ENCODE measurements at regions of chr19 and their contacts with region 1.

Region 1: DNA sequence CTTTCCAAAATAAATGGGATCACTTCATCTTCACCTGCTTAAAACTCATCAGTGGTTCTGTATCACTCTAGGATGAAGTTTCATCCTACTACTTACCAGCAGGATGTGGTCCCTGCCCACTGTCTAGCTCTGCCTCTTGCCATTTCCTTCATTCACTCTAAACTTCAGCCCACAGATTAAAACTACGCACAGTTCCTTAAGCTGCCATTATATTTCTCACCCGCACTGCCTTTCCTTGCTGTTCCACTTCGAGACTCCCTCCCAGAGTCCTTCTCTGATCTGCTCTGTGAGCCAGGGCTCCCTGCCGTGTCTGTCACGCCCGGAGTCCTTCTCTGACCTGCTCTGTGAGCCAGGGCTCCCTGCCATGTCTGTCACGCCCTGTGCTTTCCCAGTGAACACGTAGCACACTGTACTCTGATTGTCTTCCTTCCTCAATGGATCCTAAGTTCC is 52.0 kb upstream of the NPAS1 start:
- DNase-seq: peak; percentile 91 to 94
- H3K4me3 ChIP-seq: no peak overlapping the region
- H3K27ac ChIP-seq: peak overlapping the region in 2 of 3 donors; percentile 31 to 45
- H3K4me1 ChIP-seq: peaks cover 17 to 31% of the 10 kb centered on the region in 2 donors
- H3K27me3 ChIP-seq: no peaks in the 10 kb centered on the region
- CTCF ChIP-seq: no peak
- POLR2A ChIP-seq: no peak

Region 2: DNA sequence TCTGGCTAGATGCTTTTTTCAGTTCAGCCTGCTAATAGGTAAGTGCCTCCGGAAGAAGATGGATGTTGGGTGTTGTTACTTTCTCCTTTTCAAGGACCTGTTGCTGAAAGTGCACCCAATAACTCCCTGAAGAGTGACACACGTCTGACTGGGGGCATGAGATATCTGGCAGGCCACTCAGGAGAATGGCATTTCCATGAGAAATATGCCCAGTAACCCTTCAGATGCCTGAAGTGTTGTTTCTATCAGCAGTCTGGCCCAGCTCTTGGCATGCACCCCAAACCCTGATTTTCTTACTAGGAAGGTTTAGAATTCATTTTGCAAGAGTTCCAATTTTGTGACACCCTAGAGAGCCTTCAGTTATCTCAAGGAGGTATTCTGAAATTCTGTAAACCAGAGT is 35.3 kb before region 1 on chr19:
- intact Hi-C with region 1: loop called (anchors 5 kb)
- DNase-seq: peak; percentile 46
- H3K4me3 ChIP-seq: no peak overlapping the region
- H3K27ac ChIP-seq: peak overlapping the region in 2 of 3 donors; percentile 28 to 65
- H3K4me1 ChIP-seq: peaks cover 29 to 63% of the 10 kb centered on the region in 2 donors
- H3K27me3 ChIP-seq: no peaks in the 10 kb centered on the region
- CTCF ChIP-seq: no peak
- POLR2A ChIP-seq: no peak

Region 3: DNA sequence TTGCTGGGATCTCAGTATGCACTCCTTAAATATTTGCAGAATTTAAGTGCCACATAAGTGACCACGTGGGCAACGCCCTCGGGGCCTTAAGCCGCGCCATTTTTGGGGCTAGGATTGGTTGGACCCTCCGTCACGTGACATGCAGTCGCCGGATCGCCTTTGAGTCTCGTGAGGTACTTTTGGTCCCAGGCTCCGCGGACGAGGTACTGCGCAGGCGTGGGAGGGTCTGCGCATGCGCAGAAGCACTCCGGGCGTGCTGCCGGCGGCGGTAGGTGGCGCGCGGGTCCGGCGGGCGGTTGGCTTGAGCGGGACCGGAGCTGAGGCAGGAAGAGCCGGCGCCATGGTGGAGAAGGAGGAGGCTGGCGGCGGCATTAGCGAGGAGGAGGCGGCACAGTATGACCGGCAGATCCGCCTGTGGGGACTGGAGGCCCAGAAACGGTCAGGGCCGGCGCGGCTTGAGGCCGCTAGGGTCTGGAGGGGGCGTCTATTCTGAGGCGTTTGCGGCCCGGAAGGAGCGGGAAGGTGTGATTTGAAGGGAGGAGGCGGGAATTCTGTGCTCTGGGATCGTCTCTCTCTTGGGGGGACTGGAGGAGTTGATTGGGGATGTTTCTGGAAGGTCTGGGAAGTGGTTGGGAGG is 163.1 kb after region 1 on chr19 and contains the start of gene SAE1:
- intact Hi-C with region 1: no loop called
- DNase-seq: peak; percentile 95
- H3K4me3 ChIP-seq: peak within 1 kb of the TSS; percentile 51 to 80 (median 60)
- H3K27ac ChIP-seq: peak within 1 kb of the TSS; percentile 88 to 94 (median 89)
- H3K4me1 ChIP-seq: peaks cover 35 to 41% of the 10 kb centered on the region in 2 donors
- H3K27me3 ChIP-seq: no peaks in the 10 kb centered on the region
- CTCF ChIP-seq: peak in 5 of 6 experiments; percentile 14 to 74 (median 49)
- POLR2A ChIP-seq: peak in 1 of 2 donors; percentile 94
- total RNA-seq, gene SAE1: 79.5 to 119 (median 103) TPM